ENCODE measurements at regions of chr3 and their contacts with region 1.

Region 1: GRCh38 chr3:111616417-111617105 is 21.4 kb upstream of the ZBED2 start:
- DNase-seq: peak; percentile 84
- ATAC-seq: peak; percentile 84
- H3K4me3 Mint-ChIP-seq: no peak overlapping the region
- H3K27ac Mint-ChIP-seq: peak overlapping the region; percentile 92
- H3K4me1 Mint-ChIP-seq: peaks cover 77% of the 10 kb centered on the region
- H3K27me3 Mint-ChIP-seq: no peaks in the 10 kb centered on the region

Region 2: DNA sequence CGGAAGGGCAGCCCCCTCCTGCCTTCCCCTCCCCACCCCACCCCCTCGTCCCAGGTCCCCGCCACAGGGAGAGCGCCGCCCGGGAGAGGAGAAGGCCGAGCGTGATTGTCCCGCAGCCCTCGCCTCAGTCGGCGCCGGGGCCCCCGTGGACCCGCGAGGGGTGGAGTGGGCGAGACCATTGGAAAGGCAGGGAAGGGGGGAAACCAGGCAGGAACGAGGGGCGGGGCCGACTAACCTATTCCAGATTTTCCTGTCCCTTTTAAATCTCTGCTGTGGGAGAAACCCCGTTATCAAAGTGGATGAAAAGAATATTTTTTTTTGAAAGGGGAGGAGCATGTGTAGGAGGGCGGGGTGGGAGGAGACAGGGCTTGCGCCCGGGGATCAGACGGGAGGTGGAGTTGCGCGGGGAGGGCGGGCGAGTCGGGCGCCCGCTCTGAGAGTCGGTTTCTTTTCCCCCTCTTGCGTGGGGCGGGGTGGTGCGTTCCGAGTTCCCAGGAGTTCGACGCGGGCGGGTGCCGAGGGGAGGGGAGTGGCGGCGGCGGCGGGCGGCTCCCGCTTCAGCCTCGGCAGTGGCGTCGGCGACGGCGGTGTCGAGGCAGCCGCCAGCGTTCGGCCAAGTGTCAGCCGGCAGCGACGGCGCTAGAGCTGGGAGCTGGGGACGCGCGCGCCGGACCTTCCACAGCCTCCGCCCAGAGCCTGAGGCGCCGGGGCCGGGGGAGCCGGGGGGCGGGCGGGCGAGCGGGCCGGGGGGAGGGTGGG is 545.1 kb before region 1 on chr3 and contains the start of gene NECTIN3:
- CTCF ChIA-PET with region 1: interaction called, 3 read pairs
- POLR2A ChIA-PET with region 1: no interaction called
- intact Hi-C with region 1: loop called in 1 of 2 experiments (anchors 5 kb)
- DNase-seq: peak; percentile 91
- ATAC-seq: peak; percentile 95
- H3K4me3 Mint-ChIP-seq: peak within 1 kb of the TSS; percentile 83
- H3K27ac Mint-ChIP-seq: peak within 1 kb of the TSS; percentile 80
- H3K4me1 Mint-ChIP-seq: peaks cover 28% of the 10 kb centered on the region
- H3K27me3 Mint-ChIP-seq: peaks cover 40% of the 10 kb centered on the region
- total RNA-seq, gene NECTIN3: 5.1 to 5.9 TPM

Region 3: DNA sequence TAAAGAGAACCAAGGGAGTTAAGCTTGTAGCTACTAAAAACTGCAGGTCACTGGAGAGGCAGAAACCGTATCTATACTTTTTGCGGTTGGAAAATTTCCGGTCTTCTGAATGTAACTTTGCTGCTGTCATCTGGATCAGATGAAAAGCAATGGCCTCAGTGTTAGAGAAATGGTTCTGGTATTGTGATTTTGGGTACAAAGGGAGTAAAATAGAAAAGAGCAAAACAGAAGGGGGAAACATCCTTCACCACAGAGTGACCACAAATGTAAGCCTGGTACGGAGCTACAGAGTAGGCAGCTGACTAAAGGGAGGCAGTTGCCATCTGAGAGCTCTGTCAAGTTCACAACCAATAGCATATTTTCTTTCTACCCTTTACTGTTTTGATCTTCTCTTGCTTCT is 68.9 kb before region 1 on chr3:
- CTCF ChIA-PET with region 1: interaction called, 25 read pairs
- POLR2A ChIA-PET with region 1: interaction called, 12 read pairs
- intact Hi-C with region 1: loop called (anchors 1 kb)
- DNase-seq: peak; percentile 75
- ATAC-seq: peak; percentile 70
- H3K4me3 Mint-ChIP-seq: no peak overlapping the region
- H3K27ac Mint-ChIP-seq: no peak overlapping the region
- H3K4me1 Mint-ChIP-seq: peaks cover 35% of the 10 kb centered on the region
- H3K27me3 Mint-ChIP-seq: no peaks in the 10 kb centered on the region

Region 4: GRCh38 chr3:111577794-111578685 is 38.5 kb before region 1 on chr3:
- CTCF ChIA-PET with region 1: interaction called, 33 read pairs
- POLR2A ChIA-PET with region 1: interaction called, 4 read pairs
- intact Hi-C with region 1: loop called (anchors 1 kb)
- DNase-seq: no peak
- ATAC-seq: peak; percentile 84
- H3K4me3 Mint-ChIP-seq: no peak overlapping the region
- H3K27ac Mint-ChIP-seq: peak overlapping the region; percentile 72
- H3K4me1 Mint-ChIP-seq: peaks cover 75% of the 10 kb centered on the region
- H3K27me3 Mint-ChIP-seq: no peaks in the 10 kb centered on the region

Region 5: DNA sequence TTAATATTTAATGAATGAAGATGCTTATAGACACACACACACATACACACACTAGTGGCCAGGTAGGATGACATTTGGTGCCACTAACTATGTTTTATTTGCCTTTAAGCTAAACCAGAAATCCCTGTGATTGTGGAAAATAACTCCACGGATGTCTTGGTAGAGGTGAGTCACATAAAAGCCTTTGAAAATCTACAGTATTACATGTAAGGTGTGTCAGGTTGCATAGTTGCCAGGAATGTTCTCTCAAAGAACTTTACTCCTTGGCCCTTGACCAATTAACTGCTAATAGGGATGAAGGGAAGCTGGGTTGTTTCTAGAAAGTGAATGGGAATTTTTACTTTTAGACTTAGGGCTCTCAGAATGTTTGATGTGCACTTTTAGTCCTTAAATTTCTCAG is 31.3 kb before region 1 on chr3:
- CTCF ChIA-PET with region 1: interaction called, 12 read pairs
- POLR2A ChIA-PET with region 1: interaction called, 4 read pairs
- intact Hi-C with region 1: no loop called
- DNase-seq: no peak
- ATAC-seq: no peak
- H3K4me3 Mint-ChIP-seq: no peak overlapping the region
- H3K27ac Mint-ChIP-seq: no peak overlapping the region
- H3K4me1 Mint-ChIP-seq: peaks cover 78% of the 10 kb centered on the region
- H3K27me3 Mint-ChIP-seq: no peaks in the 10 kb centered on the region

Region 6: GRCh38 chr3:111594205-111594604 is 22.4 kb before region 1 on chr3:
- CTCF ChIA-PET with region 1: interaction called, 20 read pairs
- POLR2A ChIA-PET with region 1: interaction called, 16 read pairs
- intact Hi-C with region 1: loop called (anchors 1 to 2 kb)
- DNase-seq: no peak
- ATAC-seq: no peak
- H3K4me3 Mint-ChIP-seq: peak overlapping the region; percentile 93
- H3K27ac Mint-ChIP-seq: peak overlapping the region; percentile 98
- H3K4me1 Mint-ChIP-seq: peaks cover 59% of the 10 kb centered on the region
- H3K27me3 Mint-ChIP-seq: no peaks in the 10 kb centered on the region

Region 7: DNA sequence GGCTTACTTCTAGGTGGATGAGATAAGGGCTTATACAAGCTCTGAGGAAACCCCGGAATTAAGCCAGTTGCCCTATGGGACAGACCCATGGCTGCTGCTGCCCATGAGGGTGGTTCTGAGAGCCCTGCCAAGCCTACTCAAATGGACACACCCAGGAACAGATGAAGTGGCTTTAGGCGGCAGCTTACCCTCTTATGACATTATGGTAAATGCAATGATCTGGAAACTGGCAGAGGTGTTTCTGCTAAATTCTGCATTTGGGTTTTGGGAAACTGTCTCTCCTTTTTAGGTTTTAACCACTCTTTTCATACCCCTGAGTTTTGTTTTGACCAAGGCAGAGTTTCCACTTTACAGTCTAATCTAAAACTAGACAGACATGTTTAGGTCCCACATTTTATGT is 12.4 kb before region 1 on chr3:
- CTCF ChIA-PET with region 1: interaction called, 37 read pairs
- POLR2A ChIA-PET with region 1: interaction called, 6 read pairs
- intact Hi-C with region 1: no loop called
- DNase-seq: peak; percentile 67
- ATAC-seq: peak; percentile 64
- H3K4me3 Mint-ChIP-seq: peak overlapping the region; percentile 44
- H3K27ac Mint-ChIP-seq: peak overlapping the region; percentile 97
- H3K4me1 Mint-ChIP-seq: peaks cover 88% of the 10 kb centered on the region
- H3K27me3 Mint-ChIP-seq: no peaks in the 10 kb centered on the region

Region 8: GRCh38 chr3:111803123-111803593 is 186.6 kb after region 1 on chr3:
- CTCF ChIA-PET with region 1: no interaction called
- POLR2A ChIA-PET with region 1: no interaction called
- intact Hi-C with region 1: no loop called
- DNase-seq: no peak
- ATAC-seq: no peak
- H3K4me3 Mint-ChIP-seq: no peak overlapping the region
- H3K27ac Mint-ChIP-seq: no peak overlapping the region
- H3K4me1 Mint-ChIP-seq: no peaks in the 10 kb centered on the region
- H3K27me3 Mint-ChIP-seq: no peaks in the 10 kb centered on the region